MCF 10A (cell line): ENCODE measurements at regions of chr10 and their contacts with region 1.

Region 1: DNA sequence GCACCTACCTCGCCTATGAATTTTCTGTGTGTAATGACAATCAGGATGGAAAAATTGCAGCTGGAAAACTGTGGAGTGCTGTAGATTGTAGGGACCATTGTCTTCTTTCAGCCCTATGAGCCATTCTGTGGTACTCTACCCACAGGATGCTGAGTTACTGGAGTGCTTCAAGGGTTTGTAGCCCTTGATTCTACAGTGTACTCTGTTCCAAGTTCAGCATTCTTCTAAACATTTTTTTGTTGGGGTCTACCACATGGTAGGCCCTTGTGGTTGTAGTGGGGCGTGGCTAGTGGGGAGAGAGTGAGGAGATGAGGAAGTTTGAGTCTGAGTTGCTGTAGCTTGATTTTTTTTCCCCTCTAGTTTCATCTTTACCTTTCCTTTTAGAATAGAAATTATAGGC is 33.5 kb downstream of the REEP3 start:
- DNase-seq: peak; percentile 12
- H3K4me3 Mint-ChIP-seq: peak overlapping the region; percentile 56
- H3K27ac Mint-ChIP-seq: peak overlapping the region; percentile 90
- H3K4me1 Mint-ChIP-seq: peaks cover 41% of the 10 kb centered on the region
- H3K27me3 Mint-ChIP-seq: no peaks in the 10 kb centered on the region
- CTCF ChIP-seq: no peak

Region 2: GRCh38 chr10:63421591-63421990 is 133.1 kb before region 1 on chr10:
- CTCF ChIA-PET with region 1: no interaction called
- POLR2A ChIA-PET with region 1: no interaction called
- intact Hi-C with region 1: no loop called
- DNase-seq: no peak
- H3K4me3 Mint-ChIP-seq: no peak overlapping the region
- H3K27ac Mint-ChIP-seq: no peak overlapping the region
- H3K4me1 Mint-ChIP-seq: no peaks in the 10 kb centered on the region
- H3K27me3 Mint-ChIP-seq: no peaks in the 10 kb centered on the region
- CTCF ChIP-seq: no peak

Region 3: DNA sequence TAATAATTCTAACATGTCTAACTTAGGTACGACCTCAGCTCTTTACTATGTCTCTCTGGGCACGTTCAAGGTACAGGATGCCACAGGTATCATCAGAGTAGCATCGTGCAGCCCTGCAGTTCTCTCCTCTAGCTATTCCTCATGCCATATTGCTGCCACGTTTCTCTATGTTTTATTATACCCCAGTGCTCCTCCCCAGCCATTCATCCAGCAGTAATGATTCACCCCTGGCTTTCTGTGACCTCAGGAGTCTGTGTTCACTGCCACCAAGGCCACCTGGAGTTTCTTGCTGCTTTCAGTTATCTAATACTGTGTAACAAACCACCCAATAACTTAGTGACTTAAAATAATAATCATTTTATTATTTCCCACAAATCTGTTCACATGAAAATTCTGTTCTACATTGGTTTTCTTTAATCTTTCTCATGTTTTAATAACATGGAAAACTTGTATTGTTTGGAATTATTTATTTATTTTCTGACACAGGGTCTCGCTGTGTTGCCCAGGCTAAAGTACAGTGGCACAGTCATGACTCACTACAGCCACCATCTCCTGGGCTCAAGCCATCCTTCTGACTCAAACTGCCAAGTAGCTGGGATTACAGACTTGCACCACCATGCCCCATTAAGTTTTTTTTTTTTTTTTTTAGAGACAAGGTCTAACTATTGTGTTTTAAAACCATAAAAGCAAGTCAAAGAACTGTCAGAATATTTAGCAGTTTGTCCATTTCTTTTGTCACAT is 11.7 kb before region 1 on chr10:
- CTCF ChIA-PET with region 1: interaction called, 3 read pairs
- POLR2A ChIA-PET with region 1: interaction called, 58 read pairs
- intact Hi-C with region 1: no loop called
- DNase-seq: peak; percentile 27
- H3K4me3 Mint-ChIP-seq: no peak overlapping the region
- H3K27ac Mint-ChIP-seq: peak overlapping the region; percentile 6
- H3K4me1 Mint-ChIP-seq: peaks cover 15% of the 10 kb centered on the region
- H3K27me3 Mint-ChIP-seq: no peaks in the 10 kb centered on the region
- CTCF ChIP-seq: no peak